GM13977 (cell line): ENCODE measurements at regions of chr1 and their contacts with region 1.

Region 1: GRCh38 chr1:173824331-173825081 is at the starts of genes CENPL and DARS2:
- DNase-seq: peak; percentile 88
- CTCF ChIP-seq: peak; percentile 19

Region 2: DNA sequence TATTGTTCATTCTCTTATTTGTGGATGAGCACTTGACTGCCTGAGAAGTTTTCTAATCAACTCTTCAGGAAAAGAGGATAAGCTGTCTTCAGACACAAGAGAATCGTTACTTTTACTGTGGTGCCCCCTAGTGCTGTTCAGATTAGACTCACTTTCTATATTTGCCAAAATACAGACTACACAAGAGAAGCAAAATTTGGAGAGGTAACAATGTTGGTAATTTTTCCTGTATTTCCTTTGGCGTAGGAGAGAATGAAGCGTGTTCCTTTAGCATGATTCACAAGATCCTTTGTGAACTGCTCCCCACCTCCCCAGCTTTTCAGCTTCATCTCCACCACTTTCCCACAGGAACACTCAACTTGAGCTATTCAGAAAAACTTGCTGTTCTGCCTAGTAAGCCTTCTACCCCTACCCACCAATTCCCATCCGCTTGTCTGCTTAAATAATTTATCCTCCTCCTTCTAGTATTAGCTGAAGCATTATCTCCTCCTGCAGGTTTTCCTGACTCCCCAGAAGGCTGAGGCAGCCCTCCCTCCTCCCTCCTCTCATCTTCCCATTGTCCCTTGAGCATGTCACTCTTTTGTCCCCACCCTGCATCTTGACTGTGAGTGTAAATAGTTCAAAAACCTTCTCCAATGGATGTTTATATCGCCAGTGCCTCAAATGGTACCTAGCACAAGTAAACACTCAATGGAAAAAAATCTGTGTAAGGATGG is 621.9 kb before region 1 on chr1:
- in situ Hi-C with region 1: loop called (anchors 25 kb)
- DNase-seq: no peak
- CTCF ChIP-seq: peak; percentile 64

Region 3: GRCh38 chr1:173269490-173270230 is 554.8 kb before region 1 on chr1:
- in situ Hi-C with region 1: no loop called
- DNase-seq: no peak
- CTCF ChIP-seq: no peak

Region 4: DNA sequence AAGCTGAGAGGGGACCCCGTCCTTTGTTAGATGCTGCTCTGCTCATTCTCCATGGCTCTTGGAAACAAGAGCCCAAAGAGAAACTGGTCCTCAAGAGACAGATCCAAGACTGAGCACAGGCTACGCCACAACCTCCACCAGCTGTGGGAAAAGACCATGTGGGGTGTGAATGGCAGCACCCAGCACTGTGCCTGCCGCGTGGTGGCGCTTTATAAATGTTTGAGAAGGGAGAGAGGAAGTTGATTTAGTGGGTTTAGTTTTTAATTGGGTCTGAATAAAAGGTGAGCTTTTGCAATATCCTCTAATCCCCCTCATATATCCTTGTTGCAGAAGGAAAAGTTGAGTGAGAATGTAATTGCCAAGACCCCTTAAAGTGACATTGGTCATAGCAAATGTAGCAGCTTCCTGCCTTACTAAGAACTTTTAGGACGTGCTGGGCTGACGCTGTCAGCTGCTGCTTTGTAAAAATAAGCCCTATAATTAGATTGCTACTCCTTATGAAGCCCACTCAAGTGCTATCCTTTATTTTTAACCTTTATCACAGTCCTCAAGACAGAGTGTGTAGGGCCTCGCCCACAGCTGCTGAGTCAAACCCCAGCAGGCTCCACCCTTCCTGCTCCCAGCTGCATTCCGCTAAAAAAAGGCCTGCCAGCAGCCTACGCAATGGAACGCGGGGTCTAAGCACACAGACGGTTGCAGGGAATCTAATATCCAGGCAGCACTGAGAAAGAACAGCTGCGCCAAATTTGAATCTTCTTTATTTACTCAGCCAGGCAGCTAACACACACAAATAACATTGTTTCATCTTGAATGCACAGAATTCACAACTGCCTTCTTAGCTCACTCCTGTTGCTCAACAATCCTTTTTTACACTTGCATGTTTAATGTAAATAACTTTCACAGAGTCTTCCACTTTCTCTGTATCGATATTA is 394.8 kb before region 1 on chr1:
- in situ Hi-C with region 1: loop called (anchors 10 kb)
- DNase-seq: no peak
- CTCF ChIP-seq: peak; percentile 88